ENCODE measurements at regions of chr15 and their contacts with region 1.

Region 1: DNA sequence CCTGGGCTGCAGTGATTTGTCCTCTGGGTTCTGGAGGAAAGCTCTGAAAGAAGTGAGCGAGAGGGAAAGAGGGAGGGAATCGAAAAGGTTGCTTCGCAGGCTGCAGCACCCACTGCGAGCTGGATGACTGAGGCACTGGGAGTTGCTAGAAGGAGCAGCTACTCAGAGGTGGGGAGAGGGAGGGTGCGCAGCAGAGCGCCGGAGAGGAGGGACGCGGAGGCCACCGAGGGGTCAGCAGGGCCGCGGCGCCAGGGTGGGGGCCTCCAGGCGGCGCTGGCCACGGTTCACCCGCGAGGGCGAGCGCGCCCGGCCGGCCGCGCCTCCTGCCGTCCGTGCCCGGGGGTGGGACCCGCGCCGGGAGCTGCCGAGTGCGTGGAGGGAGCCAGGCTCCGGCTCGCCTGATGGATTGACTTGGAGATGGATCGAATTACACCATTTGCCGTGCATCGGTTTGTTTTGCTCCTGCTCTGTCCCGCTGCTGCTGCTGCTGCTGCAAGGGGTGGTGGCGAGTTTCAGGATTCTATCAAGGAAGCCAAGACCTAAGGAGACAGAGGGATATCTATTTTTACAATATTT is at the start of gene SEMA6D:
- DNase-seq: peak; percentile 84
- ATAC-seq: peak; percentile 87
- total RNA-seq, gene SEMA6D: 17.7 TPM

Region 2: DNA sequence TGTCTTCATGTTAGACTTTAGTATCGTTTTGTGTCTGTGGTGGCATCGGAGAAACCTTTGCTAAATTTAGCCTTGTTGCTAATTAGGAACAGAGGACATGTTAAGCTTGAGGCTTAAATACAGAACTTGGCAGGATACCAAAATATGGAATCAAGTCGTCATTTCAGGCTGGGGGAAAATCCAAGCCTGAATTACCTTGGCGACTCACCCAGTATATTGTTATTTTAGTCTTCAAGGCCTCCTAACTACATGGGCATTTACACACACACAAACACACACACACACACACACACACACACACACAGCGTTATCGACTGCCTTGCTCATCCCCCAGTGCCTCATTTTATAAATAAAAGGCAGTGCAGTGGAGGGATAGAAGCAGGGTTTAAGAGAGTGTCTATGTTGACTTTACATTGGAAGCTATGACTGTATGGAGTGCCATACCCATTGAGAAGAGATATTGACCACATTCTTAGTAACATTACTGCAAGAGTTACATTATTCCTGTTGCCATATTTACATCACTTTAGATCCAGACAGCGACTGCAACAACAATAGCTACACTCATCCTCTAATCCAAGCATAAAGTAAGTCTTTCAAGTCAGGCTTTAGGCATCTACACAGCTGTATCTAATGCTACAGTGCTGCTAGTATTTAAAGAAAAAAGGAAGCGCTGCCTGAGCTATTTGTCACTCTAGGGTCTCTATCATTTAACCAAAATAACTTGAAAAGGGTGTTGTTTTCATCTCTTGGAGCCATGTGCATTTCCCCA is 210.6 kb before region 1 on chr15:
- intact Hi-C with region 1: loop called (anchors 5 kb)
- DNase-seq: no peak
- ATAC-seq: peak; percentile 82

Region 3: DNA sequence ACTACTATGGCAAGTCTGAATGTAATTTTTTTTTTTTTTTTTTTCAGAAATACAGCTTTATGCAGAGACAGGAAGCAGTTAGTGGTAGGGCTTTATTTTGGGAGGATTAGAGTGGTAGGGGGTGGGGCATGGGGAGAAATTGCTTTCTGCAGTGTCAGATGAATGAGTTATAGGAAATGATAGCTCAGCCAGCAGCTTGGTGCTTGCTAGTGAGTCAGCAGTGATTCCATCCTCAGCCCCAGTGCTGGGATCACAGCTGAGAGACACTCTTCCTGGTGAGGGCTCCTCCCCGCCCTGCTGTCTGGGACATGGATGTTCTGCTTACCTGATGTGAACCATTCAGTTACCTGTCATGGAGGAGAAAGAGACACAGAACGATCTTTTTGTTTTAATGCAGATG is 39.7 kb after region 1 on chr15:
- intact Hi-C with region 1: loop called (anchors 5 kb)
- DNase-seq: peak; percentile 45
- ATAC-seq: no peak

Region 4: DNA sequence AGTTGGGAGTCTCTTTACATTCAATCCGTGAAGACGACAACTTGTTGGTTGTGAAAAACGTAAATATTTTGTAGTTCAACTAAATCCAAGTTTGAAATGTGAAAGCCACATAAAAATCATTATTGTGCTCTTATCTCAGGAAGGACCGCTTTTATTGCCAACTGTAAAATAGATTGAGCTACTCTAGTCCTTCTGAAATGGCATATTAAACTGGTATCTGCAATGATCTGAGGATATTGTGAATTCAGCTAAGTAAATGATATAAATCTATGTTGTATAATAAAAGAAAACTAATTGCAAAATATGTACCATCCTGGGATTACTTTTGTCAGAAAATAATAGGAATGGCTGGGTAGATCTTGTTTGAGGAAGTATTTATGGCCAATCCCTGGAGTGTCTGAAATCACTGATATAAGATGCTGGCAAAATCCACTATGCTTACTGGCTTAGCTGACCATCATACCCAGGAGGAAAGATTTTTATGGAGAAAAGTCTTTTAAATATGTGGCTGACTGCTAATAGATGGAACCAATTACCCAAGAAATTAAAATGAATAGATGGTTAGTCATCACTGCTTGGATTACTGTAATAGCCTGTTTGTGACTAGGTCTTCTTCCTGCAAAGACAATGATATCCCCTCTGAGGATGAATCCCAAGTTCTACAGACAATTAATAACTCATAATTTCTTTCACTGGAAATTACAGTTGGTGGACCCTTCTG is 192.0 kb after region 1 on chr15:
- intact Hi-C with region 1: no loop called
- DNase-seq: no peak
- ATAC-seq: no peak